ENCODE measurements at regions of chr7 and their contacts with region 1.

Region 1: GRCh38 chr7:73578342-73579127 is at the start of gene TBL2:
- DNase-seq: peak; percentile 99
- H3K4me3 ChIP-seq: peak within 1 kb of the TSS; percentile 63 to 88 (median 85)
- H3K27ac ChIP-seq: peak within 1 kb of the TSS; percentile 85 to 95 (median 93)
- H3K4me1 ChIP-seq: peaks cover 0 to 35% (median 23%) of the 10 kb centered on the region in 4 donors
- H3K27me3 ChIP-seq: no peaks in the 10 kb centered on the region
- CTCF ChIP-seq: no peak
- EP300 ChIP-seq: no peak
- POLR2A ChIP-seq: peak; percentile 65 to 75
- total RNA-seq, gene TBL2: 17.1 to 29.6 (median 26.9) TPM

Region 2: DNA sequence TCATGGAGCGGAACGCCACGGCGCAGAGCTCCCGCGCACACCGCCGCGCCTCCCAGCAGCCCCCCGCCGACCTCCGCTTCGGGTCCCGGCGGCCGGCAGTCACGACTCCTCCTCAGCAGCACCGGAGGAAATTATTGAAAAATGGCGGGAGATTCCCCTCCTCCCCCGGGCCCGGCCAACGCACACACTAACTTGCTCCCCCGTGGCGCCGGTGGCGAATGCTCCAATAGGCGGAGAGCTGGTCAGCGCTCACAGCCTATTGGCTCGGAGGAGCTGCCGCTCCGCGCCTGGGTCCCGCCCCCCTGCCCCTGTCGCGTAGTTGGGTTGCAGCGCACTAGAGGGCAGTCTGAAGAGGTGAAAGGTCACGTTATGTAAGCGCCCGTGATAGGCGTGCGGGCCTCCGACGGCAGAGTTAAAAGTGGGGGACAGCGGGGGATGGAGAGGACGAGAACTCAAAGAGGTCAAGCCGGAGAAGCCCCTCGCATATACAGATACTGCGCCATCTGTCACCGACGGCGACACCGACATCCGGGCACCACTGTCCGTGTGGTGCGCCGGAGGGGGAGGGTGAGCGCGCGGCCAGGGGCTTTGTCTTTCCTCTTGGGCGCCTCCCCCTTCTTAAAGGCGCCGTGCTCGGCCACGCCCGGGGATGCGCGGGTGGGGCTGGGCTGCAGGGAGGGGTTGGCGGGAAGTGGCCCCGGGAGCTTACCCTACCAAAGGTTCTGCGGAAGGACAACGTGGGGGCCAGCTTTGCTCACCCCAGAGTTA is 56.2 kb before region 1 on chr7 and contains the start of gene BAZ1B:
- intact Hi-C with region 1: loop called (anchors 2 kb)
- DNase-seq: peak; percentile 99
- H3K4me3 ChIP-seq: peak within 1 kb of the TSS; percentile 60 to 97 (median 92)
- H3K27ac ChIP-seq: peak within 1 kb of the TSS; percentile 86 to 99 (median 93)
- H3K4me1 ChIP-seq: peaks cover 0 to 50% (median 41%) of the 10 kb centered on the region in 4 donors
- H3K27me3 ChIP-seq: no peaks in the 10 kb centered on the region
- CTCF ChIP-seq: no peak
- EP300 ChIP-seq: peak in 1 of 4 donors; percentile 13
- POLR2A ChIP-seq: peak; percentile 27 to 44
- total RNA-seq, gene BAZ1B: 47.2 to 67.3 (median 53.5) TPM

Region 3: DNA sequence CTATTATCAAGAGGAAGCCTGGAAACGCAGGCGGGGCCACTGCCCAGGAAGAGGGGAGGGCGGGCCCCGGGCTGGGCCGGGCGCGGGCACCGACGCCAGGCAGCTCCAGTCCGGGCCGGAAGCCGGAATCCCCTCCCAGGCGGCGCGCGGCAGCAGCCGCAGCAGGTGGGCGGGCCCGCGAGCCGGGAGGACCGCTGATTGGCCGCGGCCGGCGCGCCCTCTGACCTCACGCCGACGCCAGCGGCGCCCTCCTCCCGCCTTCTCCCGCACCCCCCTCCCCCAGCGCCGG is 21.5 kb before region 1 on chr7:
- intact Hi-C with region 1: loop called (anchors 1 kb)
- DNase-seq: peak; percentile 96
- H3K4me3 ChIP-seq: peak overlapping the region; percentile 83 to 95 (median 90)
- H3K27ac ChIP-seq: peak overlapping the region; percentile 97 to 100 (median 100)
- H3K4me1 ChIP-seq: peaks cover 0 to 37% (median 24%) of the 10 kb centered on the region in 4 donors
- H3K27me3 ChIP-seq: no peaks in the 10 kb centered on the region
- CTCF ChIP-seq: no peak
- EP300 ChIP-seq: no peak
- POLR2A ChIP-seq: no peak

Region 4: GRCh38 chr7:73738612-73739374 is 160.3 kb after region 1 on chr7 and contains the start of gene ABHD11:
- intact Hi-C with region 1: loop called (anchors 1 kb)
- DNase-seq: peak; percentile 100
- H3K4me3 ChIP-seq: peak within 1 kb of the TSS; percentile 66 to 88 (median 80)
- H3K27ac ChIP-seq: peak within 1 kb of the TSS; percentile 87 to 94 (median 90)
- H3K4me1 ChIP-seq: peaks cover 0 to 29% (median 17%) of the 10 kb centered on the region in 4 donors
- H3K27me3 ChIP-seq: no peaks in the 10 kb centered on the region
- CTCF ChIP-seq: no peak
- EP300 ChIP-seq: no peak
- POLR2A ChIP-seq: peak; percentile 78 to 82
- total RNA-seq, gene ABHD11: 5.4 to 13.0 (median 9.2) TPM

Region 5: GRCh38 chr7:74173866-74174605 is 595.5 kb after region 1 on chr7 and contains the start of gene EIF4H:
- intact Hi-C with region 1: loop called (anchors 2 kb)
- DNase-seq: peak; percentile 98
- H3K4me3 ChIP-seq: peak within 1 kb of the TSS; percentile 90 to 97 (median 96)
- H3K27ac ChIP-seq: peak within 1 kb of the TSS; percentile 97 to 99 (median 98)
- H3K4me1 ChIP-seq: peaks cover 0 to 54% (median 52%) of the 10 kb centered on the region in 4 donors
- H3K27me3 ChIP-seq: no peaks in the 10 kb centered on the region
- CTCF ChIP-seq: no peak
- EP300 ChIP-seq: no peak
- POLR2A ChIP-seq: peak; percentile 33 to 45
- total RNA-seq, gene EIF4H: 201 to 274 (median 228) TPM

Measured in sigmoid colon (tissue), 7 donors.